ENCODE measurements at regions of chr3 and their contacts with region 1.

Region 1: GRCh38 chr3:109731620-109732473 is 394.5 kb upstream of the DPPA4 start:
- DNase-seq: peak; percentile 16 to 77 (median 62)
- ATAC-seq: peak; percentile 91
- H3K4me3 ChIP-seq: no peak overlapping the region
- H3K4me3 Mint-ChIP-seq: no peak overlapping the region
- H3K27ac ChIP-seq: no peak overlapping the region
- H3K27ac Mint-ChIP-seq: no peak overlapping the region
- H3K4me1 ChIP-seq: peaks cover 6% of the 10 kb centered on the region
- H3K4me1 Mint-ChIP-seq: peaks cover 7% of the 10 kb centered on the region
- H3K27me3 ChIP-seq: no peaks in the 10 kb centered on the region
- H3K27me3 Mint-ChIP-seq: no peaks in the 10 kb centered on the region
- CTCF ChIP-seq: peak; percentile 100

Region 2: DNA sequence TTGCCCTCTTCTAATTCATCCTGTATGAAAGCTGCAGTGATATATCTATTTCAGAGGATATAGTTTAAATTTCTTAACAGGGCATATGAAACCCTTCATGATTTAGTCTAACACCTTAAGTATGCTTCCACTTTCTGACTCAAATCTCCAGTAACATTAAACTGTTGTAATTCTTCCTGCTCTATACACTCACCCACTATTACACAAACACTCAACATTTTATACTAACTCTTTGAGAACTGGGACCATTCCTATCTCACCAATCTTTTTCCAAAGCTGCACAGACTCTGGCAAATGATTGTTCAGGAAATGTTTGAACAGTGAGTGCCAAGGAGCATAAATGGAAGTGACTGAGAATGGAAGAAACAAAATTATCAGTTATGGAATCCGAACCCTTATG is 165.9 kb after region 1 on chr3:
- CTCF ChIA-PET with region 1: no interaction called
- POLR2A ChIA-PET with region 1: no interaction called
- intact Hi-C with region 1: loop called in 1 of 2 experiments (anchors 5 kb)
- DNase-seq: no peak
- ATAC-seq: no peak
- H3K4me3 ChIP-seq: no peak overlapping the region
- H3K4me3 Mint-ChIP-seq: no peak overlapping the region
- H3K27ac ChIP-seq: no peak overlapping the region
- H3K27ac Mint-ChIP-seq: no peak overlapping the region
- H3K4me1 ChIP-seq: peaks cover 13% of the 10 kb centered on the region
- H3K4me1 Mint-ChIP-seq: peaks cover 20% of the 10 kb centered on the region
- H3K27me3 ChIP-seq: no peaks in the 10 kb centered on the region
- H3K27me3 Mint-ChIP-seq: no peaks in the 10 kb centered on the region
- CTCF ChIP-seq: no peak

Region 3: DNA sequence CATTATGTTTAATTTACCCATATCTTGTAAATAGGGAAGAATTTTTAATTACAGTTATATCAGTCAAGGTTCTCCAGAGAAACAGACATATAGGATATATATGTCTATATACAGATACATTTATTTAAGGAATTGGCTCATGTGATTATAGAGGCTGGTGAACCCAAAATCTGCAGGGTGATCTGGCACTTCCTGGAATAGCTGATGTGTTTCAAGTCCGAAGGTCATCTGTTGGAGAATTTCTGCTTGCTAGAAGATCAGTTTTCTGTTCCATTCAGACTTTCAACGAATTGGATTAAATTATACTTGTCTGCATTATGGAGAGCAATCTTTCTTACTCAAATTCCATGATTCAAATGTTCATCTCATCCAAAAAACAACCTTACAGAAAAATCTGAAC is 300.1 kb after region 1 on chr3:
- CTCF ChIA-PET with region 1: no interaction called
- POLR2A ChIA-PET with region 1: no interaction called
- intact Hi-C with region 1: loop called in 1 of 2 experiments (anchors 5 kb)
- DNase-seq: no peak
- ATAC-seq: no peak
- H3K4me3 ChIP-seq: no peak overlapping the region
- H3K4me3 Mint-ChIP-seq: no peak overlapping the region
- H3K27ac ChIP-seq: no peak overlapping the region
- H3K27ac Mint-ChIP-seq: no peak overlapping the region
- H3K4me1 ChIP-seq: no peaks in the 10 kb centered on the region
- H3K4me1 Mint-ChIP-seq: no peaks in the 10 kb centered on the region
- H3K27me3 ChIP-seq: no peaks in the 10 kb centered on the region
- H3K27me3 Mint-ChIP-seq: no peaks in the 10 kb centered on the region
- CTCF ChIP-seq: no peak

Region 4: DNA sequence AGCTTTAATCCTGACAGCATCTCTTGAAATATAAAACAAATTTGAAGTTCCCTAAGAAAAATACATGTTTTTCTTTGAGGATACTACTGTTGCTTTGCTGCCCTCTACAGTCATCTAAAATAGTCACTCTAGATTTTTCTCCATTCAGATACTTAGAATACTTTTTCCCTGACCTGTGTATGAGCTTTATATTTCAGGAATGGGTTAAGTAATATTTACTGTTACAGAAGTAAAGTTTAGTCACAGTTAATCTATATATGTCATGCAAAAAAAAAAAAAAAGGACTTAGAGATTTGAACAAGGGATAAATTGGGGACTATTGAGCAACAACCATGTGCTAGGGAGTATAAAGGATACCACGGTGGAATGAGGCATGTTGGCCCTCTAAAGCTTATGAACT is 1348.6 kb after region 1 on chr3:
- CTCF ChIA-PET with region 1: interaction called, 3 read pairs
- POLR2A ChIA-PET with region 1: no interaction called
- intact Hi-C with region 1: loop called in 1 of 2 experiments (anchors 5 kb)
- DNase-seq: peak in 2 of 9 experiments; percentile 27 to 42
- ATAC-seq: no peak
- H3K4me3 ChIP-seq: no peak overlapping the region
- H3K4me3 Mint-ChIP-seq: no peak overlapping the region
- H3K27ac ChIP-seq: no peak overlapping the region
- H3K27ac Mint-ChIP-seq: no peak overlapping the region
- H3K4me1 ChIP-seq: no peaks in the 10 kb centered on the region
- H3K4me1 Mint-ChIP-seq: no peaks in the 10 kb centered on the region
- H3K27me3 ChIP-seq: no peaks in the 10 kb centered on the region
- H3K27me3 Mint-ChIP-seq: peaks cover 9% of the 10 kb centered on the region
- CTCF ChIP-seq: peak; percentile 67

Measured in CD8-positive, alpha-beta T cell (primary cell).